BJ (cell line): ENCODE measurements at regions of chr11 and their contacts with region 1.

Region 1: DNA sequence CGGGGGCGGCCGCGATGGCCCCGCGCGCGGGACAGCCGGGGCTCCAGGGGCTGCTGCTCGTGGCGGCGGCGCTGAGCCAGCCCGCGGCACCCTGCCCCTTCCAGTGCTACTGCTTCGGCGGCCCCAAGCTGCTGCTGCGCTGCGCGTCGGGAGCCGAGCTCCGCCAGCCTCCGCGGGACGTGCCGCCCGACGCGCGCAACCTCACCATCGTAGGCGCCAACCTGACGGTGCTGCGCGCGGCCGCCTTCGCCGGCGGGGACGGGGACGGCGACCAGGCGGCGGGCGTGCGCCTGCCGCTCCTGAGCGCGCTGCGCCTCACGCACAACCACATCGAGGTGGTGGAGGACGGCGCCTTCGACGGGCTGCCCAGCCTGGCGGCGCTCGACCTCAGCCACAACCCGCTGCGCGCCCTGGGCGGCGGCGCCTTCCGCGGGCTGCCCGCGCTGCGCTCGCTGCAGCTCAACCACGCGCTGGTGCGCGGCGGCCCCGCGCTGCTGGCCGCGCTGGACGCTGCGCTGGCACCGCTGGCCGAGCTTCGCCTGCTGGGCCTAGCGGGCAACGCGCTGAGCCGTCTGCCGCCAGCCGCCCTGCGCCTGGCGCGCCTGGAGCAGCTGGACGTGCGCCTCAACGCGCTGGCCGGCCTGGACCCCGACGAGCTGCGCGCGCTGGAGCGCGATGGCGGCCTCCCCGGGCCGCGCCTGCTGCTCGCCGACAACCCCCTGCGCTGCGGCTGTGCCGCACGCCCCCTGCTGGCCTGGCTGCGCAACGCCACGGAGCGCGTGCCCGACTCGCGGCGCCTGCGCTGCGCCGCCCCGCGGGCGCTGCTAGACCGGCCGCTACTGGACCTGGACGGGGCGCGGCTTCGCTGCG is 697 bp downstream of the TPBGL start:
- DNase-seq: peak; percentile 39
- H3K4me3 ChIP-seq: peak overlapping the region; percentile 38
- H3K27me3 ChIP-seq: peaks cover 45% of the 10 kb centered on the region
- CTCF ChIP-seq: peak; percentile 31

Region 2: GRCh38 chr11:75022759-75023396 is 218.4 kb before region 1 on chr11:
- CTCF ChIA-PET with region 1: interaction called, 17 read pairs
- POLR2A ChIA-PET with region 1: no interaction called
- DNase-seq: peak; percentile 16
- H3K4me3 ChIP-seq: no peak overlapping the region
- H3K27me3 ChIP-seq: no peaks in the 10 kb centered on the region
- CTCF ChIP-seq: peak; percentile 97

Region 3: GRCh38 chr11:75225794-75226193 is 15.5 kb before region 1 on chr11:
- CTCF ChIA-PET with region 1: interaction called, 27 read pairs
- POLR2A ChIA-PET with region 1: no interaction called
- DNase-seq: no peak
- H3K4me3 ChIP-seq: no peak overlapping the region
- H3K27me3 ChIP-seq: peaks cover 9% of the 10 kb centered on the region; the same call in 1 of the 2 replicates
- CTCF ChIP-seq: no peak